GM12878 (cell line): ENCODE measurements at regions of chr15 and their contacts with region 1.

Region 1: DNA sequence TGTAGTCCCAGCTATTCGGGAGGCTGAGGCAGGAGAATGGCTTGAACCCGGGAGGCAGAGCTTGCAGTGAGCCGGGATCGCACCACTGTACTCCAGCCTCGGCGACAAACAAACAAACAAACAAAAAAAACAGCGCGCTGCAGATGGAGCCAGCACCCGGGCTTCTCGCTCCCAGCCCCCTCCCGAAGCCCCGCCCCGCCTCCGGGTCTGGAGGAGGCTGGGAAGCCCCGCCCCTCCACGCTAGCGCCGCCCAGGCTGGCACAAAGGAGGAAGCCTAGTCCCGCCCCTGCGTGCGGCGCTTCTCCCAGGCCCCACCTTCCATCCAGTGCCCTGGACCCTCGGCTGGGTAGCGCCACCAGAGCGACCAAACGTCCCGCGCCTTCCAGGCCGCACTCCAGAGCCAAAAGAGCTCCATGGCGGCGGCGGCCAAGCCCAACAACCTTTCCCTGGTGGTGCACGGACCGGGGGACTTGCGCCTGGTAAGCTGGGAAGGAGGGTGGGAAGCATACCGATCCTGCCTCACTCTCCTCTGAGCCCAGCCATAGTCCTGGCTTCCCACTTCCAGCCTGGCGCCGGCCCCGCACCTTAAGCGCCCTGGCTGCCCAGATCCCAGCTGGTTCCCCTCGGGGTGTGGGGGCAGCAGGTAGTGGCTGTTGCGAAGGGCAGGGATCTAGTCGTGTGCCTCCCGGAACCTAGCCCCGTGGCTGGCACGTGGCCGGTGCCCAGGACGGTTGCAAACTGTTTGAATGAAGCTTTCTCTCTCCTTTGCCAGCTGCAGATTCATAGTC is at the start of gene SORD:
- DNase-seq: no peak
- ATAC-seq: peak; percentile 99
- H3K4me3 ChIP-seq: peak within 1 kb of the TSS; percentile 82
- H3K27ac ChIP-seq: peak within 1 kb of the TSS; percentile 30
- H3K4me1 ChIP-seq: peaks cover 7% of the 10 kb centered on the region
- H3K27me3 ChIP-seq: no peaks in the 10 kb centered on the region
- CTCF ChIP-seq: no peak
- EP300 ChIP-seq: no peak
- POLR2A ChIP-seq: peak; percentile 78
- RAD21 ChIP-seq: no peak
- polyA plus RNA-seq, gene SORD: 7.5 to 18.5 TPM

Region 2: GRCh38 chr15:44861439-44861910 is 161.6 kb before region 1 on chr15:
- CTCF ChIA-PET with region 1: no interaction called
- POLR2A ChIA-PET with region 1: no interaction called
- RAD21 ChIA-PET with region 1: no interaction called
- SMC1A ChIA-PET with region 1: no interaction called
- in situ Hi-C with region 1: loop called (anchors 10 kb)
- intact Hi-C with region 1: no loop called
- DNase-seq: no peak
- ATAC-seq: no peak
- H3K4me3 ChIP-seq: no peak overlapping the region
- H3K27ac ChIP-seq: no peak overlapping the region
- H3K4me1 ChIP-seq: no peaks in the 10 kb centered on the region
- H3K27me3 ChIP-seq: no peaks in the 10 kb centered on the region
- CTCF ChIP-seq: no peak
- EP300 ChIP-seq: no peak
- POLR2A ChIP-seq: no peak
- RAD21 ChIP-seq: no peak

Region 3: DNA sequence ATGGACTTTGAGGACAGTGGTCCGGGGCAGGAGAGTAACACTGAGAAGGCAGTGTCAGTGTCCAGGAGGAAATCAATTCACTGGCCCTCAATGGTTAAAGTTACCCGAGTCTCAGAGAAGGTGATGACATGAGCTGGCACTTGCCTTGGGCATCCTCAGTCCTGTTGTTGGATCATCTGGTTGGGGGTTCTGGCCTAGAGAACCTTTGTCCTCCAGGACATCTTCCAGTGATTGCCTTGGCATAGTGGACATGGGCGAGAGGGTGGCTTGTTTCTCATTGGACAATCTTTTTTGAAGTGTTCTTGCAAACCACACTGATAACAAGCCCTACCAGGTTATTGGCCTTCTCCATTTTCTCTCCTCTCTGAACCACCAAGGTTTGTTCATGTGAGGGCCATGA is 150.0 kb before region 1 on chr15:
- CTCF ChIA-PET with region 1: no interaction called
- POLR2A ChIA-PET with region 1: no interaction called
- RAD21 ChIA-PET with region 1: no interaction called
- SMC1A ChIA-PET with region 1: no interaction called
- in situ Hi-C with region 1: no loop called
- intact Hi-C with region 1: no loop called
- DNase-seq: no peak
- ATAC-seq: no peak
- H3K4me3 ChIP-seq: no peak overlapping the region
- H3K27ac ChIP-seq: no peak overlapping the region
- H3K4me1 ChIP-seq: no peaks in the 10 kb centered on the region
- H3K27me3 ChIP-seq: no peaks in the 10 kb centered on the region
- CTCF ChIP-seq: no peak
- EP300 ChIP-seq: no peak
- POLR2A ChIP-seq: no peak
- RAD21 ChIP-seq: no peak

Region 4: DNA sequence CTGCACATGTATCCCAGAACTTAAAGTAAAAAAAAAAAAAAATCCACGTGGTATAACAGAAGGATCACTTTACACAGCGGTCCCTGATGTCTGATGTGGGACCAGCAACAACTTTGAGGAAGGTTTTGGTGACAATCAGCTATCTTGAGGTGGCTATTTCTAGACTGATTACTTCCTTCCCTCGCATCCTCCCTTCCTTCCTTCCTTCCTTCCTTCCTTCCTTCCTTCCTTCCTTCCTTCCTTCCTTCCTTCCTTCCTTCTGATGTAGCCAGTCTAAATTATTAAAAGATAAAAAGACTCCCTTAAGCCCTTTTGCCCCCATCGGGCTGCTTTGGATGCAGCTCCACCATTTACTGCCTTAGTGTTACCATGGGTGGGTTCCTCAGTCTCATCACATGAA is 14.9 kb after region 1 on chr15:
- CTCF ChIA-PET with region 1: interaction called, 22 read pairs
- POLR2A ChIA-PET with region 1: no interaction called
- RAD21 ChIA-PET with region 1: interaction called, 7 read pairs
- SMC1A ChIA-PET with region 1: interaction called, 5 read pairs
- in situ Hi-C with region 1: no loop called
- intact Hi-C with region 1: no loop called
- DNase-seq: no peak
- ATAC-seq: no peak
- H3K4me3 ChIP-seq: no peak overlapping the region
- H3K27ac ChIP-seq: no peak overlapping the region
- H3K4me1 ChIP-seq: no peaks in the 10 kb centered on the region; the same call in 1 of the 2 replicates
- H3K27me3 ChIP-seq: no peaks in the 10 kb centered on the region
- CTCF ChIP-seq: no peak
- EP300 ChIP-seq: no peak
- POLR2A ChIP-seq: no peak
- RAD21 ChIP-seq: no peak